ENCODE measurements at regions of chr13 and their contacts with region 1.

Region 1: GRCh38 chr13:45040622-45041021 is 51.3 kb downstream of the GPALPP1 start:
- DNase-seq: no peak
- H3K4me3 ChIP-seq: no peak overlapping the region
- H3K4me1 ChIP-seq: no peaks in the 10 kb centered on the region
- H3K27me3 ChIP-seq: no peaks in the 10 kb centered on the region

Region 2: GRCh38 chr13:45306966-45307365 is 266.3 kb after region 1 on chr13:
- in situ Hi-C with region 1: loop called (anchors 5 kb)
- DNase-seq: no peak
- H3K4me3 ChIP-seq: no peak overlapping the region
- H3K4me1 ChIP-seq: peaks cover 4% of the 10 kb centered on the region; the same call in 1 of the 2 replicates
- H3K27me3 ChIP-seq: no peaks in the 10 kb centered on the region

Measured in HAP-1 (cell line).